ENCODE measurements at regions of chr11 and their contacts with region 1.

Region 1: GRCh38 chr11:32176223-32176934 is 85.5 kb downstream of the RCN1 start:
- DNase-seq: peak; percentile 50 to 81 (median 73)
- ATAC-seq: peak; percentile 85
- H3K4me3 ChIP-seq: no peak overlapping the region
- H3K4me3 Mint-ChIP-seq: no peak overlapping the region
- H3K27ac ChIP-seq: no peak overlapping the region
- H3K27ac Mint-ChIP-seq: no peak overlapping the region
- H3K4me1 ChIP-seq: no peaks in the 10 kb centered on the region
- H3K4me1 Mint-ChIP-seq: peaks cover 1 to 13% (median 1%) of the 10 kb centered on the region in 7 donors
- H3K27me3 ChIP-seq: peaks cover 0 to 3% of the 10 kb centered on the region in 2 donors
- H3K27me3 Mint-ChIP-seq: peaks cover 5 to 16% (median 14%) of the 10 kb centered on the region in 5 donors

Region 2: DNA sequence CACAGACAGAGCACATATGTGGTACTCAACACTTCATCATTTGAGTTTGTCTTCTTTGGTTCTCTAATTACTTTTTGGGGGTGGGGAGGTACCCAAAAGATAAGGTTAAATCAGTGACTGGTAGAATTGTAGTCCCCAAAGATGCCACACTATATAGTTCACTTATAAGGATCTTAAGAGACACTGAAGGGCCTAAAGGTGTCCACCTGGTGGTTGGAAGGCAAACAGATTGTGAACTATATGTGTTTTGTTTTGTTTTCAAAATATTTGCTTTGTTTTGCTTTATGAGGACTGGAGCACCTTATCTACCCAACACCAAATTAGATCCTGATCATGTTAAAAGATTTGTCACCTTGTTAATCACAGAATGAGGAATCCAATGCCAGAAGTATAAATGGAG is 943.0 kb before region 1 on chr11:
- CTCF ChIA-PET with region 1: interaction called, 4 read pairs
- POLR2A ChIA-PET with region 1: no interaction called
- intact Hi-C with region 1: loop called (anchors 1 to 2 kb)
- DNase-seq: no peak
- ATAC-seq: no peak
- H3K4me3 ChIP-seq: no peak overlapping the region
- H3K4me3 Mint-ChIP-seq: no peak overlapping the region
- H3K27ac ChIP-seq: no peak overlapping the region
- H3K27ac Mint-ChIP-seq: no peak overlapping the region
- H3K4me1 ChIP-seq: no peaks in the 10 kb centered on the region
- H3K4me1 Mint-ChIP-seq: no peaks in the 10 kb centered on the region
- H3K27me3 ChIP-seq: peaks cover 0 to 3% of the 10 kb centered on the region in 2 donors
- H3K27me3 Mint-ChIP-seq: peaks cover 0 to 5% (median 0%) of the 10 kb centered on the region in 5 donors

Region 3: DNA sequence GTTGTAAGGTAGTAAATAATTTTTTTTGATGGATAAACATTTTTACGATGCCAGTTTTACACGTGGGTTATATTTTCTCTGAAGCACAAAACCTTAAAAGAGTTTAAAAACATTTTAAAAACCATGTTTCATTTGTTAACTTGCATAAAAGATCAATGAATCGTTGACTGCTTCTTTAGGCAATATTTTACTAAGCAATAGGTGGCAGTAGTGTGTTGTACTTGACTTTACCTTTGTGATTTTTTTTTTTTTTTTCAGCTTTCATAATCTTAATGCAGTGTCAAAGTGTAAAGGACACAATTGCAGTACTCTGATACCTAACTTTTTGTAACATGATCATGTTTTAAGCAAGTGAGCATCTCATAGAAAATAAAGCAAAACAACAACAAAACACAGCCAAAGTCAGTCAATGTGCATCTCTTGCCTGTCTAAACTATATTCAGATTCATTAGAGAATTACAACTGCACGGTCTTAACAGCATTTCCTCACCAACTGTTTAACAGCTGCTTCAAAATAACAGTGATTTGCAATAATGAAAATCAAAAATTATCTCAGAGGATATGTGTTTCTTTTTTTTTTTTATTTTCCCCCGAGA is 779.0 kb before region 1 on chr11:
- CTCF ChIA-PET with region 1: interaction called, 3 read pairs
- POLR2A ChIA-PET with region 1: no interaction called
- intact Hi-C with region 1: loop called in 1 of 2 experiments (anchors 1 kb)
- DNase-seq: peak in 5 of 9 donors; percentile 18 to 38 (median 35)
- ATAC-seq: peak; percentile 37
- H3K4me3 ChIP-seq: no peak overlapping the region
- H3K4me3 Mint-ChIP-seq: no peak overlapping the region
- H3K27ac ChIP-seq: no peak overlapping the region
- H3K27ac Mint-ChIP-seq: no peak overlapping the region
- H3K4me1 ChIP-seq: no peaks in the 10 kb centered on the region
- H3K4me1 Mint-ChIP-seq: peaks cover 0 to 7% (median 6%) of the 10 kb centered on the region in 7 donors
- H3K27me3 ChIP-seq: no peaks in the 10 kb centered on the region
- H3K27me3 Mint-ChIP-seq: no peaks in the 10 kb centered on the region

Region 4: GRCh38 chr11:32052218-32052617 is 124.2 kb before region 1 on chr11:
- CTCF ChIA-PET with region 1: interaction called, 40 read pairs
- POLR2A ChIA-PET with region 1: no interaction called
- intact Hi-C with region 1: loop called (anchors 1 kb)
- DNase-seq: peak; percentile 5 to 51 (median 42)
- ATAC-seq: peak; percentile 45
- H3K4me3 ChIP-seq: no peak overlapping the region
- H3K4me3 Mint-ChIP-seq: no peak overlapping the region
- H3K27ac ChIP-seq: no peak overlapping the region
- H3K27ac Mint-ChIP-seq: no peak overlapping the region
- H3K4me1 ChIP-seq: no peaks in the 10 kb centered on the region
- H3K4me1 Mint-ChIP-seq: peaks cover 0 to 2% (median 0%) of the 10 kb centered on the region in 7 donors
- H3K27me3 ChIP-seq: no peaks in the 10 kb centered on the region
- H3K27me3 Mint-ChIP-seq: peaks cover 28 to 70% (median 47%) of the 10 kb centered on the region in 5 donors

Region 5: DNA sequence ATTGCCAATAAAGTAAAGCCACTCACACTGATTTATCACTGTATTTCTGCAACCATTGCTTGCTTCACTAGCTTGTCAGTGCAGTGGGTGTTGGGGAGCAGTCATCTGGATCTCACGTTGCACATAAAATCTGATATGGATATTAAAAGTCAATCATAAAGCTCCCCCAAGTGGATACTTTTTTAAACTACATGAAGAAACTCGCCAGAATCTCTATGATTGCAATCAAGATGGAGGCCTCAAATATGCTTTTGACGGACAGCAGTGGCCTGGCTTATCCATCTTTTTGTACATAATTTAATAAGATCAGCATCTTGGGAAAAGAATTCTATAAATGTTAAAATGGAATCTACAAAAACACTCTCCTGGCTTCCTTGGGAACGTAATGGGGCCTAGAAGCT is 121.2 kb after region 1 on chr11:
- CTCF ChIA-PET with region 1: no interaction called
- POLR2A ChIA-PET with region 1: no interaction called
- intact Hi-C with region 1: loop called in 1 of 2 experiments (anchors 5 kb)
- DNase-seq: peak in 2 of 9 donors; percentile 2 to 5
- ATAC-seq: no peak
- H3K4me3 ChIP-seq: no peak overlapping the region
- H3K4me3 Mint-ChIP-seq: no peak overlapping the region
- H3K27ac ChIP-seq: no peak overlapping the region
- H3K27ac Mint-ChIP-seq: peak overlapping the region in 1 of 9 donors; percentile 65
- H3K4me1 ChIP-seq: no peaks in the 10 kb centered on the region
- H3K4me1 Mint-ChIP-seq: peaks cover 0 to 5% (median 0%) of the 10 kb centered on the region in 7 donors
- H3K27me3 ChIP-seq: no peaks in the 10 kb centered on the region
- H3K27me3 Mint-ChIP-seq: peaks cover 0 to 10% (median 2%) of the 10 kb centered on the region in 5 donors